ENCODE measurements at regions of chr6 and their contacts with region 1.

Region 1: GRCh38 chr6:142679907-142680700 is 264.9 kb downstream of the HIVEP2 start:
- DNase-seq: peak; percentile 48 to 66
- H3K4me3 ChIP-seq: no peak overlapping the region
- H3K27ac ChIP-seq: peak overlapping the region; percentile 42 to 51
- H3K4me1 ChIP-seq: peaks cover 0 to 14% (median 0%) of the 10 kb centered on the region in 4 donors
- H3K27me3 ChIP-seq: no peaks in the 10 kb centered on the region
- CTCF ChIP-seq: no peak

Region 2: GRCh38 chr6:143299253-143300166 is 619.4 kb after region 1 on chr6:
- intact Hi-C with region 1: loop called (anchors 10 kb)
- DNase-seq: no peak
- H3K4me3 ChIP-seq: no peak overlapping the region
- H3K27ac ChIP-seq: no peak overlapping the region
- H3K4me1 ChIP-seq: no peaks in the 10 kb centered on the region
- H3K27me3 ChIP-seq: no peaks in the 10 kb centered on the region
- CTCF ChIP-seq: no peak

Measured in tibial artery (tissue), 4 donors.